ENCODE measurements at regions of chr17 and their contacts with region 1.

Region 1: DNA sequence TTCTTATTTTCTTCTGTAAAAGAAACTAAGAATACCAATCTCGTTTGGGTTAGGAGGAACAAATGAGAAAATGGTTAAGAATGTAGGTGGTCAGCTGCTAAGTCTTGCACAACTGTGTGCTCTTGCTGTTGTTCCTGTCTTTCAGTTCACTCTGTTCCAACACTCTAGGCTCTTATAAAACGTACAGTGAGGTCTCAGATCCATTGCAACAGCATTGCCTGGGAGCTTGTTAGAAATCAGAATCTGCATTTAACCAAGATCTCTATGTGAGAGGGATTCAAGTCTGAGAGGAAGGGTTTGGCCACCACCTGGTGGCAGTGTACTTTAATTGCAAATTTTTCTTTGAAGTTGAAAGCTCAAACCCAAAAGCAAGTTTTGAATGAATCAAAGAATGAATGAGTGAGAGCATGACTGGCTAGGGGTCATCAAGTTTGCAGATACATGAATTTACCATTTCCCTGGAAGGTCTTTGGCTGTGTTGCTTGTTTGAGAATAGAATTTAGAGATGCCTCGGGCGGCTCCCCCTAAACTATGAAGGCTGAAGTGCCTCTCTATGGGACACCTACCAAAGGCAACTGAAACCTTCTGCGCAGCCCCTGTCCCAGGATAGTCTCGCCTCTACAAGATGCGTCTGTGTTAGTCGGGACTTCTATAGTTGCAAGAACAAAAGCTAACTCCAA is 2.5 kb downstream of the ALOX15B start:
- DNase-seq: peak; percentile 62
- ATAC-seq: peak; percentile 57
- H3K4me3 Mint-ChIP-seq: no peak overlapping the region
- H3K27ac Mint-ChIP-seq: no peak overlapping the region
- H3K4me1 Mint-ChIP-seq: peaks cover 4% of the 10 kb centered on the region
- H3K27me3 Mint-ChIP-seq: peaks cover 34% of the 10 kb centered on the region

Region 2: DNA sequence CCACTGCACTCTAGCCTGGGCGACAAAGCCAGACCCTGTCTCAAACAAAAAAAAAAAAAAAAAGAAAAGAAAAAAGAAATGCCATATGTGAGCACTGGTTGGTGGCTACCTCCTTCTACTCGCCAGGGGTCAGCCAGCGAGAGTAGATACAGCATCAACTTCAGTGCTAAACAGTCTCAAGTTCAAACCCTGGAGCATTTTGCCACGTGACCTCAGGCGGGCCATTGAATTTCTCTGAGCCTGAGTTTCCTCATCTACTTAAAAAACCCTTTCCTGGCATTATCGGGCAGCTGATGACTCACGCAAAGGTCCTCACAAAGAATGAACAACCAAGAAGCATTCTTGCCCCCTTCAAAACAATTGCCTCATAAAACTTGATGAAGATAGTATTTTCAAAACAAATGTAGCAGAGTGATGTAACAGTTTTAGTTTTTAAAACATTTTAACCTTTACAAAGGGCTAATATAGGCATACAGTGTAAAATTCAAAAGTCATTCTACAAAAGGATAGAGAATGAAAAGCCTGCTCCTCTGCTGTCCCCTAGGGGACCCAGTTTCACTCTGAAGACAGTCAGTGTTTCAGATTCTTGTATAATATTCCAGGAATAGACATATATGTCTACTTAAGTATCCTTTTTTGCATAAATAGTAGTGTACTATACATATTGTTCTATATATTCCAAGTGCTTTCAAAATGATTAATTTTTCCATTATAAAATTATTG is 295.5 kb before region 1 on chr17:
- CTCF ChIA-PET with region 1: interaction called, 17 read pairs
- DNase-seq: no peak
- ATAC-seq: no peak
- H3K4me3 Mint-ChIP-seq: no peak overlapping the region
- H3K27ac Mint-ChIP-seq: no peak overlapping the region
- H3K4me1 Mint-ChIP-seq: no peaks in the 10 kb centered on the region
- H3K27me3 Mint-ChIP-seq: peaks cover 30% of the 10 kb centered on the region

Region 3: DNA sequence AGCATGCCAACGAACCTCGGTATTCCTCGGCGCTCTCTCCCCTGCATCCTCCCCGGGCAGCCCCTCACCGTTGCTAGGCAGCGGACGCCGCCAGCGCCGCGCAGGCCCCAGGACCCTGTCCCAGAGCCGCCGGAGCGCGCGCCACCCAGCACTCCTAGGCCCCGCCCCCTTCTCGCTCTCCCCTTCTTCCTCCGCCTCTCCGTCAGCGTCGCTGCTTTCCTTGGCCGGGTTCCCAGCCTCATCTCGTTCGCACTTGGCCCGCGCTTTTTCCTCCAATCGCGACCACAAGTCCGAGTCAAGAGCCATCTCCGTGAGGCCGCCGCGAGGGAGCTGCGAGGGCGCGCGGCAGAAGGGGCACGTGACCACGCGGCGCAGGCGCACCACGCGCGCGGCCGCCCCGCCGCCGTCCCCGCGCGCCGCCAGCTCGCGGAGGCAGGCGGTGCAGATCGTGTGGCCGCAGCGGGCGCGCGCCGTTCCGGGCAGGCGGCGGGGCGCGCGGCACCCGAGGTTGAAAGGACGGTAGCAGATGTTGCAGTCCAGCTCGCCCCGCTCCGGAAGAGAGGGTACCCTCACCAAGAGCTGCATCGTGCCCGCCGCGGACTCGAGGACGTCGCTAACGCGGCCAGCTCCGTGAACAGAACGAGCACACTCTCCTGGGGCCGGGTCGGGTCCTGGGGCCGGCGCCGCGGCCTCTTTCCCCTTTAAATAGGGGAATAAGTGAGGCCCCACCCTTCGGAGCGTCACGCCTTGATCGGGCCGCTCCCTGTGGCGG is 125.6 kb before region 1 on chr17 and contains the start of gene RNF227:
- CTCF ChIA-PET with region 1: interaction called, 12 read pairs
- DNase-seq: peak; percentile 89
- ATAC-seq: peak; percentile 87
- H3K4me3 Mint-ChIP-seq: peak within 1 kb of the TSS; percentile 87
- H3K27ac Mint-ChIP-seq: peak within 1 kb of the TSS; percentile 94
- H3K4me1 Mint-ChIP-seq: peaks cover 28% of the 10 kb centered on the region
- H3K27me3 Mint-ChIP-seq: no peaks in the 10 kb centered on the region
- total RNA-seq, gene RNF227: 2.8 to 3.9 TPM

Region 4: GRCh38 chr17:7997186-7997585 is 44.2 kb before region 1 on chr17:
- CTCF ChIA-PET with region 1: interaction called, 14 read pairs
- DNase-seq: peak; percentile 72
- ATAC-seq: peak; percentile 77
- H3K4me3 Mint-ChIP-seq: no peak overlapping the region
- H3K27ac Mint-ChIP-seq: no peak overlapping the region
- H3K4me1 Mint-ChIP-seq: peaks cover 7% of the 10 kb centered on the region
- H3K27me3 Mint-ChIP-seq: peaks cover 49% of the 10 kb centered on the region

Region 5: GRCh38 chr17:8031261-8031661 is 10.1 kb before region 1 on chr17:
- CTCF ChIA-PET with region 1: interaction called, 14 read pairs
- DNase-seq: no peak
- ATAC-seq: no peak
- H3K4me3 Mint-ChIP-seq: no peak overlapping the region
- H3K27ac Mint-ChIP-seq: no peak overlapping the region
- H3K4me1 Mint-ChIP-seq: no peaks in the 10 kb centered on the region
- H3K27me3 Mint-ChIP-seq: peaks cover 58% of the 10 kb centered on the region

Region 6: GRCh38 chr17:8073627-8074484 is 32.5 kb after region 1 on chr17:
- CTCF ChIA-PET with region 1: interaction called, 12 read pairs
- DNase-seq: peak; percentile 87
- ATAC-seq: peak; percentile 86
- H3K4me3 Mint-ChIP-seq: peak overlapping the region; percentile 37
- H3K27ac Mint-ChIP-seq: no peak overlapping the region
- H3K4me1 Mint-ChIP-seq: peaks cover 17% of the 10 kb centered on the region
- H3K27me3 Mint-ChIP-seq: peaks cover 61% of the 10 kb centered on the region

Measured in activated CD8-positive, alpha-beta memory T cell treated with anti-CD3 and anti-CD28 coated beads, Interleukin-2, amount 10 ng/mL, durations not matched to agents 7 days and 5 days (primary cell).